ENCODE measurements at regions of chr6 and their contacts with region 1.

Region 1: GRCh38 chr6:134097114-134097707 is 44.8 kb upstream of the SLC2A12 start:
- DNase-seq: peak; percentile 89
- H3K4me3 Mint-ChIP-seq: no peak overlapping the region
- H3K27ac Mint-ChIP-seq: no peak overlapping the region
- H3K4me1 Mint-ChIP-seq: peaks cover 4% of the 10 kb centered on the region
- H3K27me3 Mint-ChIP-seq: peaks cover 33% of the 10 kb centered on the region

Region 2: DNA sequence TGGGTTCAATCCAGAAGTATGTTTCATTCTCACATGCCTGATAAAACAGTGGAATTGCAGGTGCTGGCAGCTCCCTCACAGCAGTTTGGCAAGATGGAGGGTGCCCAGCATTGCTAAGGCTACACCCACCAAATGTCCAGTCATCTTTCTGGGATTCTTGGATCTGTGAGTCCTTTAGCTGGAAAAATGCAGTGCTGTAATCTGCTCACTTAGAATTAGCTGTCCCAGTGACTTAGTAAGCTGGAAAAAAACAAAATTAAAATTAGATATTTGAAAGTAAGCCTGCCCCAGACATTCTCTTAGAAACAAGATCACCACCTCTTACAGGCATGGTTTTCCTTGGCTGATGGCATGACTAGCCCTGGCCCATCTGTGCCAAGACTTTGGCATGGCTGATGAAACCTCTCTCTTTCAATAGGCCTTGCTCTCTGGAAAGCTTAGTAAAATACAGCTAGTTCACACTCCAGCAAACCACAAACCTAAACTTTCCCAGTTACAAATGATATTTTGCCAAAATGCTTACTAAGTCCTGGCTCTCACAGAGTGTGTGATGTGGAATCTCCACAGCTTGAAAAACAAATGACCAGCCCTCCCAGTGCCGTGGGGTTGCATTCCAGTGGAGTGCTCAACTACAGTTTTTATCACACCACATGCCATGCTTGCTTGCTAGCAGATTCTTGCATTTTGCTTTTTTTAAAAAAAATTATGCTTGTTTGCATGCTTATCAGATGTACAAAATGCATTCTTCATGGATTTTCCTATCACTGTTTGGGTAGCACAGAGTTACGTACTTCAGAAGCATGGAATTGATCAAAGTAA is 594.6 kb before region 1 on chr6:
- intact Hi-C with region 1: no loop called
- DNase-seq: no peak
- H3K4me3 Mint-ChIP-seq: no peak overlapping the region
- H3K27ac Mint-ChIP-seq: no peak overlapping the region
- H3K4me1 Mint-ChIP-seq: no peaks in the 10 kb centered on the region
- H3K27me3 Mint-ChIP-seq: peaks cover 3% of the 10 kb centered on the region

Region 3: GRCh38 chr6:133568970-133569889 is 528.0 kb before region 1 on chr6:
- intact Hi-C with region 1: loop called (anchors 2 kb)
- DNase-seq: peak; percentile 78
- H3K4me3 Mint-ChIP-seq: peak overlapping the region; percentile 74
- H3K27ac Mint-ChIP-seq: no peak overlapping the region
- H3K4me1 Mint-ChIP-seq: peaks cover 6% of the 10 kb centered on the region
- H3K27me3 Mint-ChIP-seq: peaks cover 14% of the 10 kb centered on the region

Region 4: GRCh38 chr6:133837801-133838349 is 259.3 kb before region 1 on chr6:
- intact Hi-C with region 1: loop called (anchors 1 kb)
- DNase-seq: peak; percentile 89
- H3K4me3 Mint-ChIP-seq: peak overlapping the region; percentile 75
- H3K27ac Mint-ChIP-seq: no peak overlapping the region
- H3K4me1 Mint-ChIP-seq: peaks cover 6% of the 10 kb centered on the region
- H3K27me3 Mint-ChIP-seq: peaks cover 24% of the 10 kb centered on the region

Region 5: GRCh38 chr6:133923938-133924593 is 173.1 kb before region 1 on chr6:
- intact Hi-C with region 1: loop called (anchors 1 kb)
- DNase-seq: peak; percentile 86
- H3K4me3 Mint-ChIP-seq: no peak overlapping the region
- H3K27ac Mint-ChIP-seq: no peak overlapping the region
- H3K4me1 Mint-ChIP-seq: no peaks in the 10 kb centered on the region
- H3K27me3 Mint-ChIP-seq: peaks cover 35% of the 10 kb centered on the region

Measured in activated CD4-positive, alpha-beta T cell treated with anti-CD3 and anti-CD28 coated beads, Interleukin-2, amount 10 ng/mL, durations not matched to agents 24 days and 14 days (primary cell).